Activated CD4-positive, alpha-beta memory T cell treated with anti-CD3 and anti-CD28 coated beads for 36 hours (primary cell): ENCODE measurements at regions of chr9 and their contacts with region 1.

Region 1: DNA sequence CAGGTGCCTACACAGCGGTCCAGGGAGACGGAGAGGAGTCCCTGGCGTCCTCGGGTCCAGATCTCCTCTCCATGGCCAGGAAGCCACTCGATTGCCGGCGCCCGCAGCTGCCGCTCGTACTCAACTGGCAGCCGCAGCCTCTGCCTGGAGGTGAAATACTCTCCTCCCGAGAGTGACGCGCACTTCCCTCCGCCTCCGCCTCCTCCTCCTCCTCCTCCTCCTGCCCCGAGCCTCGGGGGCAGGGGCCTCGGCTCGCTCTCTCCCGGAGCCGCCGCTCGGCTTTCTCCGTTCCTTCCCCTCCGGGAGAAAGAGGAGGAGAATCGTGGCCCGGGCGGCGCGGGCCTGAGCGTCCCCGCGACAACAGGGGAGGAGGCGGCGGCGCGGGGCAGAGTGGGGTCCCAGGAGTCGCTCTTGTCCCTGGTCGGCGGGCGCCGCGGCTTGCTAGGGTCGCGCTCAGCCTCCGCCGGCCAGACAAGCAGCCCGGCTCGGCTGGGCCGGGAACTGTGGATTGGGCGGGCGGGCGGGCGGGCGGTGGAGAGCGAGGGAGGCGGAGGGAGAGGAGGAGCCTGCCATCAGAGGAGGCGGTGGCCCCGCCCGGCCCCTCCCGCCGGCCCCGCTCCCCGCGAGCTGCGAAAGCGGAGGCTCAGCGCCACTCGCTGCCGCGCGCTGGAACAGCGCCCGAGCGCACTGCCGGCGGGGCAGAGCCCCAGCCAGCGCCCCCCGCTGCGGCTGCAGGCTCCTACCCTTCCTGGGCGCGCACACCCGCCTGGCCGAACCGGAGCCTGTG is at the start of gene CEMIP2:
- DNase-seq: peak; percentile 91
- H3K4me3 Mint-ChIP-seq: peak within 1 kb of the TSS; percentile 87
- H3K27ac Mint-ChIP-seq: peak within 1 kb of the TSS; percentile 91
- H3K4me1 Mint-ChIP-seq: peaks cover 29% of the 10 kb centered on the region
- H3K27me3 Mint-ChIP-seq: no peaks in the 10 kb centered on the region
- total RNA-seq, gene CEMIP2: 56.5 to 70.1 TPM

Region 2: GRCh38 chr9:70563431-70564204 is 1205.0 kb before region 1 on chr9:
- CTCF ChIA-PET with region 1: no interaction called
- POLR2A ChIA-PET with region 1: no interaction called
- intact Hi-C with region 1: loop called (anchors 5 kb)
- DNase-seq: peak; percentile 81
- H3K4me3 Mint-ChIP-seq: peak overlapping the region; percentile 38
- H3K27ac Mint-ChIP-seq: peak overlapping the region; percentile 88
- H3K4me1 Mint-ChIP-seq: peaks cover 47% of the 10 kb centered on the region
- H3K27me3 Mint-ChIP-seq: no peaks in the 10 kb centered on the region

Region 3: DNA sequence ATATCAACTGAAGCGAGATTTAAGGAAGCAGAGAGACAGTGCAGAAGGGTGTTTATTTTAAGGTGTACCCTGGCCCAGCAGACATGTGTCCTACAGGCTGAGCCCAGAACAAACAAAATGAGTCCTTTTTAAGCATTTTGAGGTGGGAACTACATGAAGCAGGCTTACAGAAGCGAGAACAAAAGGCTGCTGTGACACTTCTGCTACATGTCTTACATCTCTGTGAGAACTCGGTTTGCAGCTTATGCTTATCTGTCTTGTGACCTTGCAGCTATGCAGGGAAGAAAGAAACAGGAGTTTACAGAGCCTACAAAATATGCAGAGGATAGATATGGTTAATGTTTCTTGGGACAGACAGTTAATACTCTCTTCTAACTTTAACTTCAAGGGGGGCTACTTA is 296.2 kb before region 1 on chr9:
- CTCF ChIA-PET with region 1: no interaction called
- POLR2A ChIA-PET with region 1: no interaction called
- intact Hi-C with region 1: no loop called
- DNase-seq: no peak
- H3K4me3 Mint-ChIP-seq: no peak overlapping the region
- H3K27ac Mint-ChIP-seq: no peak overlapping the region
- H3K4me1 Mint-ChIP-seq: no peaks in the 10 kb centered on the region
- H3K27me3 Mint-ChIP-seq: peaks cover 5% of the 10 kb centered on the region

Region 4: GRCh38 chr9:71604197-71605063 is 164.2 kb before region 1 on chr9:
- CTCF ChIA-PET with region 1: interaction called, 14 read pairs
- POLR2A ChIA-PET with region 1: no interaction called
- intact Hi-C with region 1: loop called (anchors 1 kb)
- DNase-seq: peak; percentile 84
- H3K4me3 Mint-ChIP-seq: no peak overlapping the region
- H3K27ac Mint-ChIP-seq: no peak overlapping the region
- H3K4me1 Mint-ChIP-seq: no peaks in the 10 kb centered on the region
- H3K27me3 Mint-ChIP-seq: no peaks in the 10 kb centered on the region

Region 5: GRCh38 chr9:71614409-71615010 is 154.1 kb before region 1 on chr9:
- CTCF ChIA-PET with region 1: no interaction called
- POLR2A ChIA-PET with region 1: no interaction called
- intact Hi-C with region 1: no loop called
- DNase-seq: no peak
- H3K4me3 Mint-ChIP-seq: no peak overlapping the region
- H3K27ac Mint-ChIP-seq: no peak overlapping the region
- H3K4me1 Mint-ChIP-seq: no peaks in the 10 kb centered on the region
- H3K27me3 Mint-ChIP-seq: no peaks in the 10 kb centered on the region

Region 6: GRCh38 chr9:71716138-71716909 is 52.3 kb before region 1 on chr9:
- CTCF ChIA-PET with region 1: interaction called, 15 read pairs
- POLR2A ChIA-PET with region 1: interaction called, 3 read pairs
- intact Hi-C with region 1: no loop called
- DNase-seq: no peak
- H3K4me3 Mint-ChIP-seq: no peak overlapping the region
- H3K27ac Mint-ChIP-seq: no peak overlapping the region
- H3K4me1 Mint-ChIP-seq: peaks cover 3% of the 10 kb centered on the region
- H3K27me3 Mint-ChIP-seq: no peaks in the 10 kb centered on the region

Region 7: GRCh38 chr9:71795097-71795813 is 26.7 kb after region 1 on chr9:
- CTCF ChIA-PET with region 1: no interaction called
- POLR2A ChIA-PET with region 1: interaction called, 8 read pairs
- intact Hi-C with region 1: loop called (anchors 1 kb)
- DNase-seq: no peak
- H3K4me3 Mint-ChIP-seq: peak overlapping the region; percentile 9
- H3K27ac Mint-ChIP-seq: peak overlapping the region; percentile 83
- H3K4me1 Mint-ChIP-seq: peaks cover 54% of the 10 kb centered on the region
- H3K27me3 Mint-ChIP-seq: no peaks in the 10 kb centered on the region

Region 8: GRCh38 chr9:71847892-71848291 is 79.3 kb after region 1 on chr9:
- CTCF ChIA-PET with region 1: no interaction called
- POLR2A ChIA-PET with region 1: no interaction called
- intact Hi-C with region 1: no loop called
- DNase-seq: no peak
- H3K4me3 Mint-ChIP-seq: no peak overlapping the region
- H3K27ac Mint-ChIP-seq: no peak overlapping the region
- H3K4me1 Mint-ChIP-seq: peaks cover under 1% of the 10 kb centered on the region
- H3K27me3 Mint-ChIP-seq: no peaks in the 10 kb centered on the region

Region 9: GRCh38 chr9:72364679-72365524 is 596.3 kb after region 1 on chr9 and contains the start of gene ZFAND5:
- CTCF ChIA-PET with region 1: no interaction called
- POLR2A ChIA-PET with region 1: interaction called, 3 read pairs
- intact Hi-C with region 1: loop called (anchors 1 kb)
- DNase-seq: peak; percentile 95
- H3K4me3 Mint-ChIP-seq: peak within 1 kb of the TSS; percentile 84
- H3K27ac Mint-ChIP-seq: peak within 1 kb of the TSS; percentile 96
- H3K4me1 Mint-ChIP-seq: peaks cover 35% of the 10 kb centered on the region
- H3K27me3 Mint-ChIP-seq: no peaks in the 10 kb centered on the region
- total RNA-seq, gene ZFAND5: 92.4 to 93.8 TPM